OCI-LY7 (cell line): ENCODE measurements at regions of chr4 and their contacts with region 1.

Region 1: GRCh38 chr4:81844717-81845116 is 373.0 kb upstream of the RASGEF1B start:
- DNase-seq: peak; percentile 86
- H3K4me3 ChIP-seq: no peak overlapping the region
- H3K27ac ChIP-seq: no peak overlapping the region
- H3K4me1 ChIP-seq: peaks cover 4% of the 10 kb centered on the region
- CTCF ChIP-seq: peak; percentile 96

Region 2: DNA sequence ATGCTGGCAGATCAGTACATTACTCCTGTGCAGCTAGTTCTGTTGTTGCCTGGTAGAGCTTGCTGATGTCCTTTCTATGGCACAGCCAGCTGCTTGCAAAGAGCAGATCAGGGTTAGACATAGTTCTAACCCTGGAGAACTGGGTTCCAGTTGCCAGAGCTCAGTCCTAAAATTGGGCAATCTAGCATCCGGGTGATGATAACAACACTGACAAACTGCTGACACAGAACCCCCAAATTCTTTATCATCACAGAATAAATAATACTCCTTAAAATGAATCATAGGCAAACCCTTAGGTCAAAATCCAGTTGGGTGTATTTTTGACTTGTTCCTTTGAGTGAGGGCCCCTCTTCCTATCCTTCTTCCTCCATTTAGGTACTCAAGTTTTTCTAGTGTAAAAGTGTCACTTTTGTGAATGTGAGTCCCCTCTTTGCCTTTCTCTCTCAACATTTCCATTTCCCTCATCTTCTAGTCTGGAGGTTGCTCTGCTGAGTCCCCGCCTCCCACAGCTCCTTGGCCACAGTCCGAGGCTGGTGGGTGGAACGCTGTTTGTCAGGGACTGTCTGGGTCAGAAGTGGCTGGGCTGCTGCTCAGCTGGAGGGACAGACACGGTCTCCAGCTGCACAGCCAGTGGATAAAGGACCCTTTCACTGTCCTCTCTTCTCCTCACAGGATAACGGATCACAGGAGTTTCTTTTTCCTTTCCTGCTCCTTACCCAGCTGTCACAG is 279.4 kb before region 1 on chr4:
- CTCF ChIA-PET with region 1: no interaction called
- POLR2A ChIA-PET with region 1: no interaction called
- intact Hi-C with region 1: no loop called
- DNase-seq: peak; percentile 37
- H3K4me3 ChIP-seq: peak overlapping the region; percentile 48
- H3K27ac ChIP-seq: peak overlapping the region; percentile 43
- H3K4me1 ChIP-seq: peaks cover 69% of the 10 kb centered on the region
- CTCF ChIP-seq: no peak

Region 3: GRCh38 chr4:81606801-81607501 is 237.8 kb before region 1 on chr4:
- CTCF ChIA-PET with region 1: no interaction called
- POLR2A ChIA-PET with region 1: no interaction called
- intact Hi-C with region 1: loop called (anchors 10 kb)
- DNase-seq: peak; percentile 66
- H3K4me3 ChIP-seq: peak overlapping the region; percentile 37
- H3K27ac ChIP-seq: peak overlapping the region; percentile 76
- H3K4me1 ChIP-seq: peaks cover 59% of the 10 kb centered on the region
- CTCF ChIP-seq: peak; percentile 40; the same call in 1 of the 2 replicates

Region 4: GRCh38 chr4:82201805-82202641 is 357.3 kb after region 1 on chr4:
- CTCF ChIA-PET with region 1: no interaction called
- POLR2A ChIA-PET with region 1: no interaction called
- intact Hi-C with region 1: loop called (anchors 5 kb)
- DNase-seq: peak; percentile 77
- H3K4me3 ChIP-seq: no peak overlapping the region
- H3K27ac ChIP-seq: no peak overlapping the region
- H3K4me1 ChIP-seq: no peaks in the 10 kb centered on the region
- CTCF ChIP-seq: peak; percentile 98

Region 5: DNA sequence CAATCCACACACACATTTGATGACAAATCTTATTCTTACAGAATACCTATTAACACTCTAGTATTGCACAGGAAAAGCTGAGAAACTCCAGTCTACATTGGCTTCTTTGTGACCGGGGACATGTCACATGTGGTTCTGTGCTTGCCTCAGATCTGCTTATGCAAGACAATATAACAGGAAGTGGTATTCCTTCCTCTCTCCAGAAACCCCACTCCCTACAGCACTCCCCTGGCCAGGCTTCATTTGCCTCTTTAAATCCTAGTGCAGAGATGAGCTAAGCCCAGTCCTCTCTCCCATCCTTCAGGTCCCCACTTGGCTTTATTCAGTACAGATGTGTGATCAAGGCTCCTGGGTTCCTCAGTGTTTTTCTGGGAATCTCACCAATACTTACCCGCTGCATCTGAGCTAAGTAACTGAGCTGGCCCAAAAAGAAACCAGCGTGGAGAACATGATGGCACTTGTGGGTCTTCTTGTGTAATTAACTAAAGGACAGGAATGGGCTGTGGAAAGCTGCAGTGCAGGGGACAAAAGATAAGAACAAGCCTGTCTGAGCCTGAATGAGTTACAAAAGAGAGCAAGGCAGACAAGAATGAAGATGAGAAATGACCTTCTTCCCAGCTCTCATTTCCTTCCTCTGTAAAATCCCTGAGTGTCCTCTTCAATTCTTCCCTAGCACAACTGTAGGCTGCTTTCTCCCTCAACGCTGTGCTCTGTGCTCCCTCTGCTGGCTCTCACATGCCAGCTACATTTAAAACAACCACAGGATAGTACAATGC is 423.5 kb after region 1 on chr4:
- CTCF ChIA-PET with region 1: no interaction called
- POLR2A ChIA-PET with region 1: no interaction called
- intact Hi-C with region 1: loop called (anchors 5 kb)
- DNase-seq: peak; percentile 66
- H3K4me3 ChIP-seq: no peak overlapping the region
- H3K27ac ChIP-seq: no peak overlapping the region
- H3K4me1 ChIP-seq: peaks cover 18% of the 10 kb centered on the region
- CTCF ChIP-seq: peak; percentile 94